ENCODE measurements at regions of chr4 and their contacts with region 1.

Region 1: DNA sequence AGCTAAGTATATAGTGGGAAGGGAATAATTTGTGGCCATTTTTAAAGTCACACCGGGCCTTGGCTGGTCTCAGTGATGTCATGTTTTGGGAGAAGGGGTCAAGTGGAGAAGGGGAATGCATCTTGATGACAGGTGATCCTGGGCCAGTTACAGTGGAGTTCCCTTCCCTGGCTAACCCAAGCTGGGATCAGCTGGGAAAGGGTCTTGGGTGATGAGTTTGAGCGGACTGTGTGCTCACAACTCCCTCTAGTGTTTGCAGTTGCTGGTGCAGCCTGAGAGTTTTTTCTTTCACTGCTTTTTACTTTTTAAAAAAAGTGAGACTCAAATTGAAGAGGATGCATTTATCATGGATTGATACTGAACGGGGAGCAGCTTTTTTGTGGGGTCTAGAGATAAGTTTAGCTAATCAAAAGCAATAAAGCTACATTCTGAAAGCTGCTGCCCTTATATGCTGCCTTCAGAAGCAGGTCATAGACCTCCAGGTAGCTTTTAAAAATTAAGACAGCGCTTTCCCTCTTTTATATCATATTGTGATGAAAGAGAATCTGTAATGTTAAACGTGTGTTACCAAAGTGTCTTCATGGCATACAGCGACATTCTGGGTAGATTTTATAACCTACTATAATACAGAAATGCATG is 164.7 kb downstream of the DCLK2 start:
- DNase-seq: no peak
- ATAC-seq: peak; percentile 70

Region 2: DNA sequence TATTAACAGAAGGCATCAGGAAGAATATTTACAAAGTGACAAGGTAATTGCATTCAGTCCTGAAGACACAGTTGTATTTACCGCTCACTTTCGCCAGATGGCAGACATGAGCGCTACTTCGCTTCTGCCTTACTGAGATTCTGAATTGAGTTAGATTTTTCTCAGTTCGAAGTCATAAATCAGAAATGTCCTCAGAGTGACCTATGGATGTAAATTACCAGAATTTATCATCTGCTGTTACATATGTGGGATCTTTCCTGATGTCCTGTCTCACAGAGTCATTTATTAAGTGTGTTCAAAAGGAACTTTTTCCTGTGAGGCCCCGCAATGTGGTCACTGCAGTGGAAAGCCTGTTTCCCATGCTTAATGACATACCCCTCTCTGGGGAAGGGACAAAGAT is 262.0 kb before region 1 on chr4:
- intact Hi-C with region 1: loop called (anchors 5 kb)
- DNase-seq: peak; percentile 42
- ATAC-seq: peak; percentile 60

Region 3: DNA sequence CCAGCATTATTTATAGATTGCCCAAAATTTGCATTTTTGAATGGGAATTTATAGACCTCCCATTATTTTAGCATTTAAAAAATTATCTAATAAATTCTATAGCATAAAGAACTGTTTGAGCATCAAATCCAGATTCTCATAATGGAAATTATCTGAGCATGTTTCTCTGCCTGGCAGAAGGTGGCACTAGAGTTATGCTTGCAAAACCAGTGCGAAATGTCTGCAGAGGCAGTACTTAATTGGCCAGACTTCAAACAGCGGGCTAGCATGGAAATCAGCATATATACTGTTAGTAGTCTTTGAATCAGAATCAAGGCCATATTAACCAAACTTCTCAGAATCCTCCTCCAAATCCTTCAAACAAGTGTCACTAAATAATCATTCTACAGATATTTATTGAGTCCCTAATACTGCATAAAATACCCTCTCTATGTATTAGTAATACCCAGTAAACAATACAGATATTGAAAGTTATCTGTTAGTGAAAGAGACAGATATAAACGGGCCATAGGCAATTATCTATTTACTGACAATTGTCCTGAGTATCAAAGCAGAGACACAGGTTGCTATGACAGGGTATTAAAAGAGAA is 243.4 kb before region 1 on chr4:
- intact Hi-C with region 1: loop called (anchors 5 kb)
- DNase-seq: no peak
- ATAC-seq: peak; percentile 82

Region 4: GRCh38 chr4:150181536-150181935 is 61.4 kb before region 1 on chr4:
- intact Hi-C with region 1: no loop called
- DNase-seq: no peak
- ATAC-seq: no peak

Region 5: GRCh38 chr4:150297861-150298474 is 55.0 kb after region 1 on chr4:
- intact Hi-C with region 1: no loop called
- DNase-seq: no peak
- ATAC-seq: peak; percentile 46

Region 6: GRCh38 chr4:150325872-150326271 is 82.9 kb after region 1 on chr4:
- intact Hi-C with region 1: no loop called
- DNase-seq: no peak
- ATAC-seq: no peak